ENCODE measurements at regions of chr14 and their contacts with region 1.

Region 1: DNA sequence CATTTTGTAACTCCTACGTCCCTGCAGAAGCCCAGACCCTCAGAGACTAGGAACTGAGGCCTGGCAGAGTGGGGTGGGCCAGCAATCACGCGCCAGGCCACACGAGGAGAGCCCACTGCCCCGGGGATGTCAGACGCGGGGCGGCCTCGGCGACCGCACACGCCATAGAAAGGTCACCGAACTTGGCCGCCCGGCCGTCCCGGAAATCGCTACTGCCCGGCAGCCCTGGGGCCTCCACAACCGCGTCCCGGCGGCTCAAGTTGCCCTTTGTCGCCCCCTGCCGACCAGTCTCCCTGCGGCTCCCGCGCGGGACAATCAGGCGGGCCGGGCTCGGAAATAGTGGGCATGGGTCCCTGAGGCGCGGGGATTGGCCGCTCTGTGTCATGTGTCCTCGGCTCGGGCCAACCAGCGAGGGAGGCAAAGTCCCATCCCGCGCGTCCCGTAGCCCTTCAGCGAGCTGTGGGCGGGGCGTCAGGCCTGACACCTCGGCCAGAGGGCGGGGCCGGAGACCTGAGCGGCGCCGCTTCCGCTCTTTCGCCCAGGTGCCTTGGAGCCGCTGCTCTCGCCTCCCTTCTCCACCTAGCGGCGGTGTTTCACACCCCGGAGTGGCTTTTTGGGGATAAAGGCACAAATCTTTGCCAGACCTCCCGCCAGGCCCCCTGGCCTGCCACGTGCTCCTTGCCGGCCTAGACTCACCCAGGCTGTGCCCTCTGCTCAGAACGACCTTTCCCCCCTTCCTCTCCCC is 33.4 kb upstream of the DEGS2 start:
- DNase-seq: peak; percentile 100
- ATAC-seq: peak; percentile 99
- H3K4me3 Mint-ChIP-seq: peak overlapping the region; percentile 43
- H3K27ac Mint-ChIP-seq: peak overlapping the region; percentile 89; the same call in 1 of the 2 replicates
- H3K4me1 Mint-ChIP-seq: peaks cover 11% of the 10 kb centered on the region
- H3K27me3 Mint-ChIP-seq: peaks cover 3% of the 10 kb centered on the region; the same call in 1 of the 2 replicates
- CTCF ChIP-seq: peak; percentile 76

Region 2: GRCh38 chr14:100108042-100108825 is 84.6 kb before region 1 on chr14:
- CTCF ChIA-PET with region 1: interaction called, 13 read pairs
- POLR2A ChIA-PET with region 1: no interaction called
- DNase-seq: peak; percentile 97
- ATAC-seq: peak; percentile 96
- H3K4me3 Mint-ChIP-seq: no peak overlapping the region
- H3K27ac Mint-ChIP-seq: peak overlapping the region; percentile 67; the same call in 1 of the 2 replicates
- H3K4me1 Mint-ChIP-seq: peaks cover 11% of the 10 kb centered on the region
- H3K27me3 Mint-ChIP-seq: no peaks in the 10 kb centered on the region
- CTCF ChIP-seq: peak; percentile 90

Region 3: DNA sequence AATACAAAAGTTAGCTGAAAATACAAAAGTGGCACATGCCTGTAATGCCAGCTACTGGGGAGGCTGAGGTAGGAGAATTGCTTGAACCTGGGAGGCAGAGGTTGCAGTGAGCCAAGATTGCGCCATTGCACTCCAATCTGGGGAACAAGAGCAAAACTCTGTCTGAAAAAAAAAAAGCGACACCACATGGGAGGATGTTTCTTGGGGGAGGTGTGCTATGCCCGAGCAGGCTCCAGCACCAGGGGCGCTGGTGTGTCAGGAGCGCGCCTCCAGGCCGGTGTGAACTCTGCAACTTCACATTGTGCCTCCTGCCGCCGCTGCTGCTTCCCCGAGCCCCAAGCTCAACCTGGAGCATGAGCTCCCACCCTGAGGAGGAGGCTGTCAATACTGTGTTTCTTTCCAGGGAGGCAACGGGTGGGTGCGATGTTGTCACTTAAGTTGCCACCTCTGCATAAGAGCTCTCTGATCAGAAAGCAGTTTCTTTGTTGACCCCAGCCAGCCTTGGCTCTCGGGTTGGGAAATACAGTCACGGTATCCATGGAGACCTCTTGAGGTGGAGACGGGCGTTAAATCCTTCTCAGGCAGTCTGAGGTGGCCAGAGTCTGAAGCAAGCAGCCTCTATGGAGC is 52.3 kb before region 1 on chr14:
- CTCF ChIA-PET with region 1: interaction called, 26 read pairs
- POLR2A ChIA-PET with region 1: no interaction called
- DNase-seq: peak; percentile 74
- ATAC-seq: peak; percentile 86
- H3K4me3 Mint-ChIP-seq: no peak overlapping the region
- H3K27ac Mint-ChIP-seq: 0 out of 2 replicates have a peak overlapping the region, but pooled peaks have one; percentile 49
- H3K4me1 Mint-ChIP-seq: peaks cover 8% of the 10 kb centered on the region
- H3K27me3 Mint-ChIP-seq: no peaks in the 10 kb centered on the region
- CTCF ChIP-seq: 0 out of 2 replicates have a peak, but pooled peaks have one; percentile 14

Region 4: GRCh38 chr14:100165376-100165775 is 27.5 kb before region 1 on chr14:
- CTCF ChIA-PET with region 1: interaction called, 31 read pairs
- POLR2A ChIA-PET with region 1: no interaction called
- DNase-seq: peak; percentile 60
- ATAC-seq: peak; percentile 90
- H3K4me3 Mint-ChIP-seq: peak overlapping the region; percentile 64
- H3K27ac Mint-ChIP-seq: 0 out of 2 replicates have a peak overlapping the region, but pooled peaks have one; percentile 44
- H3K4me1 Mint-ChIP-seq: peaks cover 10% of the 10 kb centered on the region
- H3K27me3 Mint-ChIP-seq: peaks cover 39% of the 10 kb centered on the region
- CTCF ChIP-seq: no peak

Region 5: GRCh38 chr14:100213956-100214774 is 21.3 kb after region 1 on chr14:
- CTCF ChIA-PET with region 1: interaction called, 52 read pairs
- POLR2A ChIA-PET with region 1: interaction called, 3 read pairs
- DNase-seq: peak; percentile 93
- ATAC-seq: peak; percentile 93
- H3K4me3 Mint-ChIP-seq: peak overlapping the region; percentile 66
- H3K27ac Mint-ChIP-seq: peak overlapping the region; percentile 99
- H3K4me1 Mint-ChIP-seq: peaks cover 19% of the 10 kb centered on the region
- H3K27me3 Mint-ChIP-seq: peaks cover under 1% of the 10 kb centered on the region; the same call in 1 of the 2 replicates
- CTCF ChIP-seq: no peak

Region 6: GRCh38 chr14:100238419-100239189 is 45.8 kb after region 1 on chr14 and contains the start of gene YY1:
- CTCF ChIA-PET with region 1: interaction called, 16 read pairs
- POLR2A ChIA-PET with region 1: no interaction called
- DNase-seq: peak; percentile 99
- ATAC-seq: peak; percentile 92
- H3K4me3 Mint-ChIP-seq: peak within 1 kb of the TSS; percentile 94
- H3K27ac Mint-ChIP-seq: peak within 1 kb of the TSS; percentile 99
- H3K4me1 Mint-ChIP-seq: peaks cover 48% of the 10 kb centered on the region
- H3K27me3 Mint-ChIP-seq: no peaks in the 10 kb centered on the region
- CTCF ChIP-seq: no peak
- total RNA-seq, gene YY1: 78.8 to 83.1 TPM (median 81.9 TPM) in 3 replicates

Region 7: GRCh38 chr14:100285021-100285912 is 92.4 kb after region 1 on chr14:
- CTCF ChIA-PET with region 1: interaction called, 14 read pairs
- POLR2A ChIA-PET with region 1: no interaction called
- DNase-seq: peak; percentile 80
- ATAC-seq: peak; percentile 69
- H3K4me3 Mint-ChIP-seq: peak overlapping the region; percentile 64
- H3K27ac Mint-ChIP-seq: no peak overlapping the region; the same call in 1 of the 2 replicates
- H3K4me1 Mint-ChIP-seq: peaks cover 47% of the 10 kb centered on the region
- H3K27me3 Mint-ChIP-seq: no peaks in the 10 kb centered on the region
- CTCF ChIP-seq: peak; percentile 82

Measured in WTC11 (cell line).